Left cardiac atrium (tissue), 4 donors: ENCODE measurements at regions of chr3 and their contacts with region 1.

Region 1: DNA sequence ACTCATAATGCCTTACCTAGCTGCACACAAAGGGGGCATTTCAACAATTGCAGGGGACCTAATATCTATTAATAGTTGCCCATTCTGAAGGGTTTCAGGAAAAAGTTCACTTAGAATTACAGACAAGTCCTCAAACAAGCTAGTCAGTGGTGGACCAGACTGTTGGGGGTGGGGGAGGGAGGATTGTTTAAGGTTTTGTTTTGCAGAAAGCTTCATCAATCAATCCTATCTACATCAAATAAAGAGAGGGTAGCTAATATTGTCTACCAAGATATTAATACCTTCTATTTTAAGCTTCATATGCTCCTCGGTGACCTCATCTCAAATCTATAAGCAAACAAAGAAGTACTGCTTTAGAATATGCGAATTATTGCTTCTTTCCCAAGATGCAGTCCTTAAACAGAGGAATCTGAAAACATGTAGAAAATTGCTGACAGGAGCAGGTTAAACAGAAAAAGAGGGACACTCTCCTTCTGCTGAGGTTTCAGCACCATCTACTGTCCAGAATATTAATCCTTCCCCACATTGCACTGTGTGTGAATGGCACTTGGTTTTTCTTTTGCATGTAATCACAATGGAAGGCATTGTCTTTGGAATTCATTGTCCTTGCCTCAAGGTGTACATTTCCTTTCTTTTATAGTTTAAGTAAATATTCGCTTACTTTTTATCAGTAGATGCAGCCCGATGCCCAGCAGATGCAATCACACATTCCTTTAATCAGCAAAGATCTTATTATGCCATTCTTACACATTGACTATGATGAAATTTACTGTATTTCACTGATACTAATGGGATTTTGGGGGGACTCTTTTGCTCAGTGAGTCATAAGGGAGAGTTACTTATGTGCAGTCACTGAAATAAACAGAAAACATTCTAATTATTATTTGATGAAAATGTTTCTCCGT is 94.7 kb downstream of the IL5RA start:
- DNase-seq: no peak
- ATAC-seq: peak; percentile 89 to 91

Region 2: GRCh38 chr3:1082108-1082507 is 1933.3 kb before region 1 on chr3:
- intact Hi-C with region 1: loop called in 1 of 2 experiments (anchors 2 kb)
- DNase-seq: peak; percentile 32
- ATAC-seq: peak in 1 of 2 donors; percentile 52

Region 3: DNA sequence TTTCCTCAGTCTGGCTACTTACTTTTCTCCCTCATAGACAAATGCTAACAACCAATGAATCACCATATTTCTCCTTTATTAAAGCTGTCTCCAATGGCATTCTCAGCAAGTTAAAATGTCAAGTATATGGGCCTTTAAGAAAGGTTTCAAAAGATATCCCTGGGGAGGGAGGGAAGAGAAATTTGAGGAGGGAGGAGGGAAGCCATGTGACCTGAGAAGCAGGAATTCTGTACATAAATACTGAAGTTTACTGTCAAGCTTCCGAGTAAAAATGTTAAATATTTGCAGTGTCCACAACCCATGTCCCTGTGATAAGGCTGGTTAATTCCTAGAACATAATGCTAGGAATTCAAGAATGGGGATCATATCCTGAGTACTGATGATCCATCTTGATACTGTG is 740.9 kb before region 1 on chr3:
- intact Hi-C with region 1: loop called in 1 of 2 experiments (anchors 10 kb)
- DNase-seq: no peak
- ATAC-seq: no peak

Region 4: DNA sequence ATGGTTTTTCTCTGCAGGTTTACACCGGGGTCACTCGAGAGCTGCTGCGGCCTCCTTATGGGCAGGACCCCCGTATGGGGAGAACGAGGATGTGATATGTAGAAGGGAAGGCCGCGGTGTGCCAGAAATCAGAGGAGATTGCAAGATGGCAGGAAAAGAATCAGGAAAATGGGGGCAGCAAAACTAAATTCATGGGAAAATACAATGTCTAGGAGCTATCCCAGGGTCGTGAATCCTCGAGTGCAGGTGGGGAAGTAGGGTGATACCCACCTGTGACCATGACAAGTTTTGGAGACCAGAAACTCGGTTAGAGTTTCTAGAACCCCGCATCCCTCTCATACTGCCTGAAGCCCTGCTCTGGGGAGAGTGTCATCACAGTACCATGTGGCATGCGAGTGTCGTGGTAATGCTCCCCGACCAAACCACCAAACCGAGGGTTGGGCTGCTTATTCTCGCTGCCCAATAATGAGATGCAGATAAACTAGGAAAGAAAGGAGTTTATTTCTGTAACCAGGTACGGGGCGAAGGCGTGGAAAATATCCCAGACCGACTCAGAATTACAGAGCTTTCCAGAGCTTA is 112.1 kb after region 1 on chr3:
- intact Hi-C with region 1: no loop called
- DNase-seq: no peak
- ATAC-seq: no peak